ENCODE measurements at regions of chr18 and their contacts with region 1.

Region 1: DNA sequence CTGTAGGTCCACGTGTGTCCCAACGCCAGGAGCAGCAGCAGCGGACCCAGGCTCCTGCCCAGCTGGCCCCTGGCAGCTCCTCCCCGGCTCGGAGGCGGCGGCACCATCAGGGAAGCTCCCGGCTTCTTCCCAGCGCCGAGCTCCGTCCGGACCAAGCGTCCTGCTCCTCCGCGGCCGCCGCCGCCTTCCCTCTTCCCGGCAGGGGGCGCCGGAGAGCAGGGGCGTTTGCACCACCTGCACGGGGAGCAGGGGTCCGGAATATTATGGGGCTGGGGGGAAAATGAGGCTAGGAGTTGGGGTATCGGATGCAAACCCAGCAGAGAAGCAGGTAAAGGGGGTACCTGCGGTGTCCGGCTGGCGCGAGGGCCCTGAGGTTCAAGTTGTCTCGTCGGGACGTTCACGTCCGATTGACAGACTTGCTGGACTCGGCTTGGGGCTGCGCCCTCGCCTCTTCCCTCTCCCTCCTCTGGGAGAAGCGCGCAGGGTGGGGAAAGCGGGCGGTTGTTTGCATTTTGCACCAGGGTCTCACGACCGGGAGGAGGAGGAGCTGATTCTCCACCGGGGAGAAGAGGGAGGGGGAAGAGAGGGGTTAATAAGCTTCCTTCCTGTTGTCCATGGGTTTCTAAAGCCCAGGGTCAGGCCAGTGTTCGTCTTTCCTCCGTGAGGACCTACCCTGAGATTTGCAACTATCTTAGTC is at the start of gene CCBE1:
- DNase-seq: peak; percentile 71
- ATAC-seq: peak; percentile 82
- H3K4me3 ChIP-seq: peak within 1 kb of the TSS; percentile 71
- H3K27ac ChIP-seq: peak within 1 kb of the TSS; percentile 63
- H3K4me1 ChIP-seq: peaks cover 13% of the 10 kb centered on the region
- H3K27me3 ChIP-seq: no peaks in the 10 kb centered on the region
- CTCF ChIP-seq: peak; percentile 82
- POLR2A ChIP-seq: 0 out of 2 replicates have a peak, but pooled peaks have one; percentile 11
- RAD21 ChIP-seq: peak; percentile 75
- total RNA-seq, gene CCBE1: 93.9 and 148 TPM in 2 replicates

Region 2: DNA sequence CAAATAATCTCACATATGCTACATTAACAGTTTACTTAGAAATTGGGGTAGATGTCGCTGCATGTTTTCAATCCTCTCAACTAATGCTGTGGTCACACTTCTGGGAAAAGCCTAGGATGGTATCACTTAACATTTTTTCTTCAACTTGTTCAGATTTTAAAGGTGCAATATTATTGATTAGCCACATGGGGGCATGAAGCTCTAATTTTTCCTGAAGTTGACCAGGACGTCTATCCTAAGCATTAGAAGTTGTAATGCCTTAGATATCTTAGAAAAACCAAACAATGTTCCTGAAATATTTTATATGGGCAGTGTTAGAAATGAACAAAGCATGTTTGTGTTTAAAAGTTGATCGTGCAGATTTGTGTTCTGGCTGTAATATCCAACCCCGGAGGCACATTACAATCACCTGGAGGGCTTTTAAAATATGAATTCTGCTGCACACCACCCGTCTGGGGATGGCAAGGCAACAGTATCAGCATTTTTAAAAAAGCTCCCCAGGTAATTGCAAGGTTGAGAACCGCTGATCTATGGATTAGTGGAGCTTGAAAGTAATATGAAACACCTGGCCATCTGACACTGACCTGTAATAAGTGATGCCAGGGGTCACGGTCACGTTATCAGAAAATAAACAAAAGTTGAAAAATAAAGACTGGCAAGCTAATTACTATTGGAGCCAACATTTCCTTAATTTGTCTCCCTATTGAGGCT is 237.9 kb before region 1 on chr18:
- CTCF ChIA-PET with region 1: interaction called, 9 read pairs
- POLR2A ChIA-PET with region 1: interaction called, 3 read pairs
- dilution Hi-C with region 1: no loop called
- in situ Hi-C with region 1: loop called (anchors 10 kb)
- intact Hi-C with region 1: loop called (anchors 1 kb)
- DNase-seq: peak; percentile 75
- ATAC-seq: peak; percentile 86
- H3K4me3 ChIP-seq: no peak overlapping the region
- H3K27ac ChIP-seq: peak overlapping the region; percentile 36; the same call in 1 of the 2 replicates
- H3K4me1 ChIP-seq: peaks cover 5% of the 10 kb centered on the region
- H3K27me3 ChIP-seq: no peaks in the 10 kb centered on the region
- CTCF ChIP-seq: peak; percentile 77
- POLR2A ChIP-seq: no peak
- RAD21 ChIP-seq: peak; percentile 82

Region 3: DNA sequence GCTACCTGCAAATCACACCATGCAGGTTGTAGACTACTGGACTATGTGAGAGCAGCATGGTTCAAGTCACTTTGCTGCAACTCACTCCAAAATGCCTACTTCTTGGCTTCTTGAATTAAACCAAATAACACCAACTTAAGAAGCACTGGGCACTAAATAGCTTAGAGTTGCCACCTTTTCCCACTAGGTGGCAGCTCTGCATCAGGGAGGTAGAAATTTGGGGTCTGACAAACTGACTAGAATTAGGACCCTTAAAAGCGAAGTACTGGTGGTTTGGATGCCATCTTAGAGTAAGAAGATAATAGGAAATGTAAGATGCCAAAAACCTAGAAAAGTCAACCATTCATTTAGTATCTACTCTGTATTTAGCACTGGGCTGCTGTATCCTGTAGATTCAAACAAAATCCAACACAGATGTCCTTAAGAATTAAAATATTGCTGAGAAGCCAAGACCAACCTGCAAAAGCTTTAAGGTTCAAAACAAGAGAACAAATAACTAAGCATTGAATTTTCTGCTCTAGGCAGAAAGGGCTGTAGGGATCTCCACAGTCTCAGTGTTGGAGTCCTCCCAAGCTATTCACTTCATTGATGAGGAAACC is 65.7 kb before region 1 on chr18:
- CTCF ChIA-PET with region 1: interaction called, 13 read pairs
- POLR2A ChIA-PET with region 1: no interaction called
- dilution Hi-C with region 1: no loop called
- in situ Hi-C with region 1: loop called (anchors 10 kb)
- intact Hi-C with region 1: loop called (anchors 1 kb)
- DNase-seq: peak; percentile 58
- ATAC-seq: peak; percentile 73
- H3K4me3 ChIP-seq: no peak overlapping the region
- H3K27ac ChIP-seq: no peak overlapping the region
- H3K4me1 ChIP-seq: peaks cover 9% of the 10 kb centered on the region
- H3K27me3 ChIP-seq: no peaks in the 10 kb centered on the region
- CTCF ChIP-seq: peak; percentile 78
- POLR2A ChIP-seq: no peak
- RAD21 ChIP-seq: peak; percentile 89

Region 4: GRCh38 chr18:59744271-59744721 is 46.9 kb after region 1 on chr18:
- CTCF ChIA-PET with region 1: interaction called, 4 read pairs
- POLR2A ChIA-PET with region 1: no interaction called
- dilution Hi-C with region 1: no loop called
- in situ Hi-C with region 1: no loop called
- intact Hi-C with region 1: loop called (anchors 10 kb)
- DNase-seq: peak; percentile 96
- ATAC-seq: peak; percentile 77
- H3K4me3 ChIP-seq: no peak overlapping the region
- H3K27ac ChIP-seq: peak overlapping the region; percentile 88
- H3K4me1 ChIP-seq: peaks cover 20% of the 10 kb centered on the region
- H3K27me3 ChIP-seq: no peaks in the 10 kb centered on the region
- CTCF ChIP-seq: no peak
- POLR2A ChIP-seq: no peak
- RAD21 ChIP-seq: no peak

Region 5: GRCh38 chr18:59769129-59769865 is 71.9 kb after region 1 on chr18:
- CTCF ChIA-PET with region 1: interaction called, 11 read pairs
- POLR2A ChIA-PET with region 1: no interaction called
- dilution Hi-C with region 1: no loop called
- in situ Hi-C with region 1: no loop called
- intact Hi-C with region 1: no loop called
- DNase-seq: peak; percentile 36
- ATAC-seq: peak; percentile 56
- H3K4me3 ChIP-seq: no peak overlapping the region
- H3K27ac ChIP-seq: no peak overlapping the region
- H3K4me1 ChIP-seq: peaks cover 2% of the 10 kb centered on the region
- H3K27me3 ChIP-seq: no peaks in the 10 kb centered on the region
- CTCF ChIP-seq: no peak
- POLR2A ChIP-seq: no peak
- RAD21 ChIP-seq: no peak

Region 6: GRCh38 chr18:59783138-59783537 is 85.8 kb after region 1 on chr18:
- CTCF ChIA-PET with region 1: interaction called, 9 read pairs
- POLR2A ChIA-PET with region 1: no interaction called
- dilution Hi-C with region 1: no loop called
- in situ Hi-C with region 1: no loop called
- intact Hi-C with region 1: loop called (anchors 1 kb)
- DNase-seq: peak; percentile 74
- ATAC-seq: peak; percentile 71
- H3K4me3 ChIP-seq: no peak overlapping the region
- H3K27ac ChIP-seq: no peak overlapping the region
- H3K4me1 ChIP-seq: peaks cover 9% of the 10 kb centered on the region
- H3K27me3 ChIP-seq: no peaks in the 10 kb centered on the region
- CTCF ChIP-seq: peak; percentile 62
- POLR2A ChIP-seq: no peak
- RAD21 ChIP-seq: peak; percentile 63

Region 7: DNA sequence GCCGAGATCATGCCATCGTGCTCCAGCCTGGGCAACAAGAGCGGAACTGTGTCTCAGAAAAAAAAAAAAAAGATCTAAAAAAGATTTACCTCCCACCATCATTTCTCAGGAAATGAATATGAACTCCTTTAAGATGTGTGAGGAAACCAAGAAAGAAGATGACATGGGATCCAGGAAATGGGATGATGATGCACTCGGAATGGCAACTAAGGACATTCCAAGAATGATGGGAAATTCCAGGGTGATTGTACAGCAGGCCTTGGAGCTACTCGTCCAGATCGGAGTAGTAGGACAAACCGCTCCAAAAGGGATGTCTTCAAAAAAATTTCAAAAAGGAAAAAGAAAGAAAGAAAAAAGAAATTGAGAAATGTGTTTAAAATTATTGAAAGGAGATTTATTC is 117.5 kb after region 1 on chr18:
- CTCF ChIA-PET with region 1: interaction called, 3 read pairs
- POLR2A ChIA-PET with region 1: no interaction called
- dilution Hi-C with region 1: no loop called
- in situ Hi-C with region 1: loop called (anchors 5 kb)
- intact Hi-C with region 1: no loop called
- DNase-seq: peak; percentile 96
- ATAC-seq: peak; percentile 93
- H3K4me3 ChIP-seq: no peak overlapping the region
- H3K27ac ChIP-seq: peak overlapping the region; percentile 76
- H3K4me1 ChIP-seq: peaks cover 3% of the 10 kb centered on the region; the same call in 1 of the 2 replicates
- H3K27me3 ChIP-seq: no peaks in the 10 kb centered on the region
- CTCF ChIP-seq: no peak
- POLR2A ChIP-seq: no peak
- RAD21 ChIP-seq: peak; percentile 12; the same call in 1 of the 2 replicates

Measured in IMR-90 (cell line).